Calu3 (cell line): ENCODE measurements at regions of chr18 and their contacts with region 1.

Region 1: GRCh38 chr18:56756966-56757365 is 105.8 kb downstream of the WDR7 start:
- DNase-seq: no peak
- H3K4me3 Mint-ChIP-seq: no peak overlapping the region
- H3K27ac Mint-ChIP-seq: no peak overlapping the region
- H3K4me1 Mint-ChIP-seq: no peaks in the 10 kb centered on the region
- H3K27me3 Mint-ChIP-seq: no peaks in the 10 kb centered on the region
- CTCF ChIP-seq: no peak

Region 2: GRCh38 chr18:56662902-56663301 is 94.1 kb before region 1 on chr18:
- CTCF ChIA-PET with region 1: no interaction called
- intact Hi-C with region 1: no loop called
- DNase-seq: no peak
- H3K4me3 Mint-ChIP-seq: no peak overlapping the region
- H3K27ac Mint-ChIP-seq: no peak overlapping the region
- H3K4me1 Mint-ChIP-seq: no peaks in the 10 kb centered on the region
- H3K27me3 Mint-ChIP-seq: no peaks in the 10 kb centered on the region
- CTCF ChIP-seq: no peak

Region 3: DNA sequence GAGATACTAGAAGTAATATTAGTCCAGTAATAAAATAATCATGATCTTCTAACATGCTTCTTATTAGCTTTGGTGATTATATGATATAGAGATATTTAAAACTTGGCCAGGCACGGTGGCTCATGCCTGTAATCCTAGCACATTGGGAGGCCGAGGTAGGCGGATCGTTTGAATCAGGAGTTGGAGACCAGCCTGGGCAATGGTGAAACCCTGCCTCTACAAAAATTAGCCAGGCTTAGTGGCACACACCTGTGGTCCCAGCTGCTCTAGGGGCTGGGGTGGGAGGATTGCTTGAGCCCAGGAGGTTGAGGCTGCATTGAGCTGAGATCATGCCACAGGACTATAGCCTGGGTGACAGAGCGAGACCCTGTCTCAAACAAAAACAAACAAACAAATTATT is 18.8 kb before region 1 on chr18:
- CTCF ChIA-PET with region 1: no interaction called
- intact Hi-C with region 1: no loop called
- DNase-seq: no peak
- H3K4me3 Mint-ChIP-seq: no peak overlapping the region
- H3K27ac Mint-ChIP-seq: no peak overlapping the region
- H3K4me1 Mint-ChIP-seq: no peaks in the 10 kb centered on the region
- H3K27me3 Mint-ChIP-seq: no peaks in the 10 kb centered on the region
- CTCF ChIP-seq: no peak

Region 4: DNA sequence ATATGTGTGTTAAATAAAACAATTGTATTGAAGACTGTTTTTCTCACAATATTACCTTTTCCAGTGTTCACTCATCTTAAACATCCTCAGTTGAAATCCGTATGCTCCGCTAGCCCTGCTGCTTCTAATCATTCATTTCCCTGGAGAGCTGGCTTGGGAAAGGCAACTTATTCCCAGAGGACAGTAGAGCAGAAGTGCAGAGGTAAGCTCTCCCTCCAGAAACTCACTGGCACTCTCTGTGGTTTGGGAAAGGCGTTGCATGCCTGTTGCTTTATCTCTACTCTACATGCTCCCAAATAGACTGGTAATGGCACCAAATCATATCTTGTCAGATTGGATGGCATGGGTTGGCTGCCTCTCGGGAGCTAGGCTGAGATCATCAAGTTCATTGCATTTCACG is 272.8 kb after region 1 on chr18:
- CTCF ChIA-PET with region 1: no interaction called
- intact Hi-C with region 1: loop called (anchors 10 kb)
- DNase-seq: peak; percentile 8
- H3K4me3 Mint-ChIP-seq: no peak overlapping the region
- H3K27ac Mint-ChIP-seq: no peak overlapping the region
- H3K4me1 Mint-ChIP-seq: peaks cover 12% of the 10 kb centered on the region
- H3K27me3 Mint-ChIP-seq: no peaks in the 10 kb centered on the region
- CTCF ChIP-seq: no peak